ENCODE measurements at regions of chr1 and their contacts with region 1.

Region 1: GRCh38 chr1:177333936-177334595 is 163.3 kb downstream of the BRINP2 start:
- DNase-seq: no peak
- H3K4me3 ChIP-seq: no peak overlapping the region
- H3K27ac ChIP-seq: no peak overlapping the region
- H3K4me1 ChIP-seq: peaks cover 11% of the 10 kb centered on the region
- H3K27me3 ChIP-seq: peaks cover 37% of the 10 kb centered on the region
- CTCF ChIP-seq: peak; percentile 50

Region 2: DNA sequence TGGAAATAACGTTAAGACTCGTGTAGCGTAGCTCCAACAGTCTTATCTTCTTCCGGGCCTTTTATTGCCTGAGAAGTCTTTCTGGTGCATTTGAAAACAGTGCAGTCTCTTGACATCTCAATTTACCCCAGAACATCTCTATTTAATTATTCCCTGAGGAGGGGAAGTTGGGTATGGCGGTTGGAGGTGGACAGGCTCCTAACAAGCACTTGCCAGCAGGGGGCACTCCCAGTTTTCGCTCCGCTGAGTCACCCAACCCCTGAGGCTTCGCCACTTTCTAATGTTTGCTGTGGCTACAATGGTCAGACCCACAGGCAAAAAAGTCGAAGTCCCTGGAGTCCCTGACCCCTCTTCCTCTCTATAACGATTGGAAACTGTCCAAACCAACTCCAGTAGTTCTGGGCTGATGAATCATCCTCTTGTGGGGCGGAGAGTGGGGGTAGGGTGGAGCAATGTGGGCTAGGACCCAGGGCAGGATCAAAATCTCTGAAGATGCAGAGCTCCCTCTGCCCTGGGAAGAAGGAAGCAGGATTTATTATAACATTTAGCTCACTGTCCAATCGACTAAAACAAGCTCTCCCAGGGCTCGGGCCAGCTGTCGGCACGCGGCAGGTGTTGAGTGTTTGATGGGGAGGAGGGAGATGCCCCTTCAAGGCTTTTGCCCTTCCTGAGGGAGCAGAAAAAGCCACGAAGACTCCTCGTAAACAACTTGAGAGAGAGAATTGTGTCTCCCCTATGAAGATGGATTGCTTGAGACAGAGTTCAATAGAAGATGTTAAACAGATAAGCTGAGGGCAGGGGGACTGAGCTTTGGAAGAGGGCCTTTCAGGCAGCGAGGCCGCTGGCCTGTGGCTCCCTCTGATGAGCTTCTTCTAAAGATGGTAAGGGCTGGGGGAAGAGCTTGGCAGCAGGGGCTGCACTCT is 77.7 kb before region 1 on chr1:
- intact Hi-C with region 1: loop called (anchors 10 kb)
- DNase-seq: peak; percentile 52
- H3K4me3 ChIP-seq: no peak overlapping the region
- H3K27ac ChIP-seq: peak overlapping the region; percentile 38
- H3K4me1 ChIP-seq: peaks cover 12% of the 10 kb centered on the region
- H3K27me3 ChIP-seq: peaks cover 40% of the 10 kb centered on the region
- CTCF ChIP-seq: peak; percentile 74

Measured in left ventricle myocardium inferior (tissue), 1 donor.